ENCODE measurements at regions of chr19 and their contacts with region 1.

Region 1: DNA sequence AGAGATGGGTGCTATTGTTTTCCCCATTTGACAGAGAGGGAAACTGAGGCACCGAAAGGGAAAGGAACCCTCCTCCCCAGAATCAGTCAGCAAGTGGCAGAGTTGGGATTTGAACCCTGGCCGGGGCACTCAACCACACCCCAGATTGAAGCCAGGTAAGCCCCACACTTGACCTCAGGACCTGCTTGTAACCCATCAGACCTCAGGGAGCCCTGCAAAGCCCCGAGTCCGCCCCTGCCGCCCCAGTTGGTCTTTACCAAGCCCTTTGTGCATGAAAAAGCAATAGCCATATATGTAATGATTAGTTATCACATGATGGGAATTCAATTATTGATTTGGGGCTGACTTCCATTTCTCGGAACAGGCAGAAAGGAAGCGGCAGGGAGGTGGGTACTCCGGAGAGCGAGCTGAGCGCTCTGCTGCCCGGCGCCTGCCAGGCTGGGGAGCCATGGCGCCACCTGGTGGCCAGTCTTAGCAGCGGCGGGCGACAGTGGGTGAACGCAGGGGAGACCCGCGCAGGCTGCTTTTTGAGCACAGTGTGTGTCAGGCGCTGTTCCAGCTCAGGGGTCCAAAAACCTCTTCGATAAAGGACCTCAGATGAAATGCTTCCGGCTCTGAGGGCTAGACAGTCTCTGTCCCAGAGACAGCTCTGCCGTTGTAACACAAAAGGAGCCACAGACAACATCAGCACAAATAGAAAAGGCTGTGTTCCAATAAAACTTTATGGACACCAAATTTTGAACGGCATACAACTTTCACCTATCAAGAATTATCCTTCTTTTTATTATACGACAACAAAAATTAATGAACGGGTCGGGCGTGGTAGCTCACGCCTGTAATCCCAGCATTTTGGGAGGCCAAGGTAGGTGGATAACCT is 82.9 kb upstream of the CACNA1A start:
- DNase-seq: peak; percentile 62 to 87
- H3K4me3 ChIP-seq: no peak overlapping the region
- H3K4me1 ChIP-seq: no peaks in the 10 kb centered on the region
- H3K27me3 ChIP-seq: no peaks in the 10 kb centered on the region

Region 2: DNA sequence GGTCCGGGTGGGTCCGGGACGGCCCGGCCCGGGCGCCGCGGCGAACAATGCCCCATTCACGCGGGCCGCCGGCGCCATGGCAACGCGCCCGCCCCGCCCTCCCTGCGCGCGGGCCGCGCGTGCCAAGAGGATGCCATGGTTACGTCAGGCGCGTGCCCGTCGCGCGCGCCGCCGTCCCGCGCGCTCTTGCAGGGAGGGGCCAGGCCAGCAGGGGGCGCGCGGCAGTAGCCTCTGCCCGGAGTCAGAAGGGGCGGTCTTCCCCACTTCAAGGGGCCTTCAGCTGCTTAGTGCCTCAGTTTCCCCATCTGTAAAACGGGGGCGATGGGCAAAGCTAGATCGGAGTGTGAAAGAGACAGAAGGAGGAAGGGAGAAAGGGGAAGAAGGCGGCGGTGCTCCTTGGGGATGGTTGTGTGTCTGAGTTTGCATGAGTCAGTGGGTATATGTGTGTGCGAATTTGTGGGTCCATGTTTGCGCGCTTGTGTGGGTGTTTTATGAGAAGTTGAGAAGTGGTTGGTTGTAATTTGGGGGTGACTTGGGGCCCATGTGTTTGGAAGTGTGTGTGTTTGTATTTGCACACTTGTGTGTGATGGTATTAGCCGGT is 605.6 kb before region 1 on chr19:
- in situ Hi-C with region 1: loop called (anchors 25 kb)
- DNase-seq: peak; percentile 51 to 82
- H3K4me3 ChIP-seq: peak overlapping the region; percentile 22
- H3K4me1 ChIP-seq: peaks cover 5% of the 10 kb centered on the region; the same call in 1 of the 2 replicates
- H3K27me3 ChIP-seq: no peaks in the 10 kb centered on the region

Region 3: GRCh38 chr19:13277104-13277809 is 311.9 kb before region 1 on chr19:
- in situ Hi-C with region 1: loop called (anchors 5 kb)
- DNase-seq: peak; percentile 71 to 78
- H3K4me3 ChIP-seq: no peak overlapping the region
- H3K4me1 ChIP-seq: no peaks in the 10 kb centered on the region
- H3K27me3 ChIP-seq: peaks cover 3% of the 10 kb centered on the region; the same call in 1 of the 2 replicates

Region 4: GRCh38 chr19:13417054-13417453 is 172.1 kb before region 1 on chr19:
- in situ Hi-C with region 1: no loop called
- DNase-seq: no peak
- H3K4me3 ChIP-seq: no peak overlapping the region
- H3K4me1 ChIP-seq: no peaks in the 10 kb centered on the region
- H3K27me3 ChIP-seq: no peaks in the 10 kb centered on the region

Region 5: GRCh38 chr19:13718733-13719132 is 129.5 kb after region 1 on chr19:
- in situ Hi-C with region 1: loop called (anchors 5 kb)
- DNase-seq: peak in 1 of 2 experiments; percentile 33
- H3K4me3 ChIP-seq: no peak overlapping the region
- H3K4me1 ChIP-seq: no peaks in the 10 kb centered on the region
- H3K27me3 ChIP-seq: peaks cover 6% of the 10 kb centered on the region

Region 6: GRCh38 chr19:13861732-13862531 is 272.7 kb after region 1 on chr19:
- in situ Hi-C with region 1: loop called (anchors 5 kb)
- DNase-seq: peak; percentile 87 to 94
- H3K4me3 ChIP-seq: peak overlapping the region; percentile 10
- H3K4me1 ChIP-seq: peaks cover 6% of the 10 kb centered on the region
- H3K27me3 ChIP-seq: no peaks in the 10 kb centered on the region

Region 7: GRCh38 chr19:14775869-14776586 is 1186.8 kb after region 1 on chr19:
- in situ Hi-C with region 1: no loop called
- DNase-seq: no peak
- H3K4me3 ChIP-seq: peak overlapping the region; percentile 29
- H3K4me1 ChIP-seq: no peaks in the 10 kb centered on the region
- H3K27me3 ChIP-seq: 0 out of 2 replicates have a peak, but pooled peaks cover 7% of the 10 kb centered on the region